Caco-2 (cell line): ENCODE measurements at regions of chr12 and their contacts with region 1.

Region 1: GRCh38 chr12:104877123-104877705 is 80.9 kb downstream of the SLC41A2 start:
- DNase-seq: peak in 1 of 2 experiments; percentile 21
- H3K4me3 ChIP-seq: no peak overlapping the region
- H3K4me3 Mint-ChIP-seq: no peak overlapping the region
- H3K27ac Mint-ChIP-seq: no peak overlapping the region
- H3K4me1 ChIP-seq: no peaks in the 10 kb centered on the region
- H3K4me1 Mint-ChIP-seq: no peaks in the 10 kb centered on the region
- H3K27me3 ChIP-seq: no peaks in the 10 kb centered on the region
- H3K27me3 Mint-ChIP-seq: no peaks in the 10 kb centered on the region
- CTCF ChIP-seq: peak; percentile 47 to 49

Region 2: GRCh38 chr12:104381731-104382480 is 495.3 kb before region 1 on chr12:
- CTCF ChIA-PET with region 1: interaction called, 3 read pairs
- POLR2A ChIA-PET with region 1: no interaction called
- intact Hi-C with region 1: loop called (anchors 2 kb)
- DNase-seq: peak; percentile 74 to 81
- H3K4me3 ChIP-seq: no peak overlapping the region
- H3K4me3 Mint-ChIP-seq: no peak overlapping the region
- H3K27ac Mint-ChIP-seq: no peak overlapping the region
- H3K4me1 ChIP-seq: no peaks in the 10 kb centered on the region
- H3K4me1 Mint-ChIP-seq: peaks cover 6% of the 10 kb centered on the region
- H3K27me3 ChIP-seq: no peaks in the 10 kb centered on the region
- H3K27me3 Mint-ChIP-seq: peaks cover 5% of the 10 kb centered on the region
- CTCF ChIP-seq: peak; percentile 89 to 94

Region 3: DNA sequence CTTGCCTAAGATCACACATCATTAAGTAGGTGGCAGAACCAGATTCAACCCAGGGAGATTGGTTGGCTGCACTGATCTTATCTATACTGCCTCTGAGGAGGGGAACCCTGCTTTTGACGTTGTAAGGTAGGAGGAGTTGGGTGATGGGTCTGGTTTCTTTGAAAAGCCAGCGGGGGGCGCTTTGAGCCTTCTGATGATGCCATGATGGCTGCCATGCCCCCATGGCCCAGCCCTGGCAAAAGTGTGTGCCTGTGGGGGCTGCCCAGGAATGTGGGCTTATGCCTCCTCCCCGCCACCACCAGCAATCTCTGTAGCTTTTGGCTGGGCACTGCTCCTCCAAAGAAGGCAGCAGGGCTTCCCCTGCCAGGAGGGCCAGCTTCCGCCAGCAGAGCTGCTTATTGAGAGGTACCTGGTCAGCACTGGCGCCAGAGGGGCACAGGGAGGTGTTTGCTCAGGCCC is 143.5 kb before region 1 on chr12:
- CTCF ChIA-PET with region 1: no interaction called
- POLR2A ChIA-PET with region 1: no interaction called
- intact Hi-C with region 1: loop called (anchors 10 kb)
- DNase-seq: peak in 1 of 2 experiments; percentile 12
- H3K4me3 ChIP-seq: no peak overlapping the region
- H3K4me3 Mint-ChIP-seq: no peak overlapping the region
- H3K27ac Mint-ChIP-seq: no peak overlapping the region
- H3K4me1 ChIP-seq: no peaks in the 10 kb centered on the region
- H3K4me1 Mint-ChIP-seq: no peaks in the 10 kb centered on the region
- H3K27me3 ChIP-seq: no peaks in the 10 kb centered on the region
- H3K27me3 Mint-ChIP-seq: peaks cover 10% of the 10 kb centered on the region
- CTCF ChIP-seq: no peak

Region 4: DNA sequence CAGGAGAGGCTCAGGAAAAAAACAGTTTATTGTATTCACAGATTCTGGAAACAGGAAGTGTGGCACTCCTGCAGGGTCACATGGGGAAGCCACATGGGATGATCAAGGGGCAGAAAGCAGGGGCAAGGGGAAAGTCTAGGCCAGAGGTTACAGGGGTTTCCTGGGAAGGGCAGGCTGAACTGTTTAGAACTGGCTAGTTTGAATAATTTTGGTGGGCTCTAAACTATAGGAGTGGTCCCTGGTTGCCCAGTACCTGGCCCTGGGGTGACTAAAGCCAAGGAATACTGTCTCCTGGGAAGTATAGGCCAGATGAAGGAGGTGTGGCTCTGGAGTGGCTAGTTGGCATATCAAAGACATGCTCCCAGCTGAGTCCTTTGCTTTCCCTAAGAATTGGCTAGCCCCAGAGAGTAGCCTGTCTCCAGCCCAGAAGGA is 88.4 kb before region 1 on chr12:
- CTCF ChIA-PET with region 1: no interaction called
- POLR2A ChIA-PET with region 1: no interaction called
- intact Hi-C with region 1: no loop called
- DNase-seq: no peak
- H3K4me3 ChIP-seq: no peak overlapping the region
- H3K4me3 Mint-ChIP-seq: no peak overlapping the region
- H3K27ac Mint-ChIP-seq: no peak overlapping the region
- H3K4me1 ChIP-seq: no peaks in the 10 kb centered on the region
- H3K4me1 Mint-ChIP-seq: no peaks in the 10 kb centered on the region
- H3K27me3 ChIP-seq: no peaks in the 10 kb centered on the region
- H3K27me3 Mint-ChIP-seq: no peaks in the 10 kb centered on the region
- CTCF ChIP-seq: no peak

Region 5: GRCh38 chr12:104944252-104944651 is 67.0 kb after region 1 on chr12:
- CTCF ChIA-PET with region 1: no interaction called
- POLR2A ChIA-PET with region 1: no interaction called
- intact Hi-C with region 1: no loop called
- DNase-seq: no peak
- H3K4me3 ChIP-seq: no peak overlapping the region
- H3K4me3 Mint-ChIP-seq: no peak overlapping the region
- H3K27ac Mint-ChIP-seq: no peak overlapping the region
- H3K4me1 ChIP-seq: 0 out of 2 replicates have a peak, but pooled peaks cover 3% of the 10 kb centered on the region
- H3K4me1 Mint-ChIP-seq: no peaks in the 10 kb centered on the region
- H3K27me3 ChIP-seq: no peaks in the 10 kb centered on the region
- H3K27me3 Mint-ChIP-seq: no peaks in the 10 kb centered on the region
- CTCF ChIP-seq: no peak